ENCODE measurements at regions of chr12 and their contacts with region 1.

Region 1: GRCh38 chr12:121223292-121224285 is 13.7 kb downstream of the P2RX4 start:
- DNase-seq: peak; percentile 70
- H3K4me3 ChIP-seq: no peak overlapping the region
- H3K27ac ChIP-seq: peak overlapping the region; percentile 59 to 79 (median 74)
- H3K4me1 ChIP-seq: peaks cover 6 to 43% (median 24%) of the 10 kb centered on the region in 4 donors
- H3K27me3 ChIP-seq: no peaks in the 10 kb centered on the region
- CTCF ChIP-seq: peak; percentile 29 to 75 (median 50)
- EP300 ChIP-seq: no peak
- POLR2A ChIP-seq: no peak

Region 2: GRCh38 chr12:121110211-121110940 is 113.2 kb before region 1 on chr12:
- in situ Hi-C with region 1: loop called in 1 of 4 experiments (anchors 10 kb)
- intact Hi-C with region 1: no loop called
- DNase-seq: peak; percentile 77
- H3K4me3 ChIP-seq: no peak overlapping the region
- H3K27ac ChIP-seq: no peak overlapping the region
- H3K4me1 ChIP-seq: peaks cover 0 to 13% (median 3%) of the 10 kb centered on the region in 4 donors
- H3K27me3 ChIP-seq: no peaks in the 10 kb centered on the region
- CTCF ChIP-seq: peak; percentile 93 to 96 (median 94)
- EP300 ChIP-seq: no peak
- POLR2A ChIP-seq: no peak

Region 3: GRCh38 chr12:121132601-121133481 is 90.7 kb before region 1 on chr12 and contains the start of gene P2RX7:
- in situ Hi-C with region 1: no loop called
- intact Hi-C with region 1: loop called (anchors 10 kb)
- DNase-seq: peak; percentile 82
- H3K4me3 ChIP-seq: peak within 1 kb of the TSS; percentile 26 to 53 (median 32)
- H3K27ac ChIP-seq: peak within 1 kb of the TSS; percentile 73 to 88 (median 82)
- H3K4me1 ChIP-seq: peaks cover 13 to 42% (median 21%) of the 10 kb centered on the region in 4 donors
- H3K27me3 ChIP-seq: no peaks in the 10 kb centered on the region
- CTCF ChIP-seq: peak in 3 of 5 experiments; percentile 10 to 18 (median 16)
- EP300 ChIP-seq: no peak
- POLR2A ChIP-seq: no peak
- total RNA-seq, gene P2RX7: 0.96 to 7.1 (median 5.1) TPM